PC-3 (cell line): ENCODE measurements at regions of chr12 and their contacts with region 1.

Region 1: DNA sequence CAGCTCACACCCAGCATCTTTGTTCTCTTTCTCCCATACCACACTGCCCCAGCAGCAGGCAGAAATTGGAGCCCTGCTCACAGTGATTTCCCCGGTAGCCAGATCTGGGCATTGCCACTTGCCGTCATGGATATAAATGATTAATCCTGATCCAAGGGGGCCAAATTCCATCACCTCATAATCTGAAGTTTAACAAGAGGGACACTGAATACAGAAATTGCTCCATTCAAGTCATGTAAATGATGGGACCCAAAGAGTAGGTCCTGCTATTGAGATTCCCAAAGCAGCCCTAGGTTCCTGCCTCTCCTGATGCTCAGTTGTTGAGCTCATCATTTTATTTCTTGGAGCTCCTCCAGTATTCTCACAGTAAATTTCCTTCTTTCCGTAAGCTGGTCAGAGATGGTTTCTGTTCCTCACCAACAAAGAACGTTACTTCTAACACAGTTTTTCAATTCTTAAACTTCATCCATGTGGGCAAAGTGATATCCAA is 11.7 kb downstream of the ITPR2 start:
- DNase-seq: no peak
- ATAC-seq: no peak
- H3K4me3 ChIP-seq: no peak overlapping the region
- H3K27ac ChIP-seq: no peak overlapping the region
- H3K4me1 ChIP-seq: peaks cover 11% of the 10 kb centered on the region
- H3K27me3 ChIP-seq: no peaks in the 10 kb centered on the region
- CTCF ChIP-seq: no peak

Region 2: GRCh38 chr12:26748741-26749431 is 72.4 kb before region 1 on chr12:
- CTCF ChIA-PET with region 1: no interaction called
- POLR2A ChIA-PET with region 1: no interaction called
- intact Hi-C with region 1: loop called (anchors 5 kb)
- DNase-seq: peak; percentile 58
- ATAC-seq: peak; percentile 83
- H3K4me3 ChIP-seq: no peak overlapping the region
- H3K27ac ChIP-seq: no peak overlapping the region
- H3K4me1 ChIP-seq: peaks cover 24% of the 10 kb centered on the region
- H3K27me3 ChIP-seq: no peaks in the 10 kb centered on the region
- CTCF ChIP-seq: no peak

Region 3: DNA sequence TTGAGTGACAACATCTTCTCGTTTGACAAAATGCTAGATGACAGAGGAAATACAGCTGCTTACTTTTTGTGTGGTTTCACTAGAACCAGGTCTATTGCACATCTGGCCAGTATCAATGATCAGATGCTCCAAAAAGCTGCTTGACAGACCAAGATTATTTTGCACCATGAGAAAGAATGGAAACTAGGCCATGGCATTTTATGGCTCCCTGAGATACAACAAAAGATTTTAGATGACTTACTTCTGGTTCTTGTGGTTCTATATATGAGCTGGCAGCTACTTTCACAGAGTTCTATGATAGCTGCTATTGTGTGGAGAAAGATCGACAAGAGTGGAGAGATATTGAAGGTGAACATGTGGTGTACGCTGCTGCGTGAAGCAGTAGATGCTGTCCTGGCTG is 676.9 kb after region 1 on chr12:
- CTCF ChIA-PET with region 1: no interaction called
- POLR2A ChIA-PET with region 1: no interaction called
- intact Hi-C with region 1: no loop called
- DNase-seq: no peak
- ATAC-seq: no peak
- H3K4me3 ChIP-seq: no peak overlapping the region
- H3K27ac ChIP-seq: no peak overlapping the region
- H3K4me1 ChIP-seq: peaks cover 8% of the 10 kb centered on the region
- H3K27me3 ChIP-seq: no peaks in the 10 kb centered on the region
- CTCF ChIP-seq: no peak